ENCODE measurements at regions of chr17 and their contacts with region 1.

Region 1: DNA sequence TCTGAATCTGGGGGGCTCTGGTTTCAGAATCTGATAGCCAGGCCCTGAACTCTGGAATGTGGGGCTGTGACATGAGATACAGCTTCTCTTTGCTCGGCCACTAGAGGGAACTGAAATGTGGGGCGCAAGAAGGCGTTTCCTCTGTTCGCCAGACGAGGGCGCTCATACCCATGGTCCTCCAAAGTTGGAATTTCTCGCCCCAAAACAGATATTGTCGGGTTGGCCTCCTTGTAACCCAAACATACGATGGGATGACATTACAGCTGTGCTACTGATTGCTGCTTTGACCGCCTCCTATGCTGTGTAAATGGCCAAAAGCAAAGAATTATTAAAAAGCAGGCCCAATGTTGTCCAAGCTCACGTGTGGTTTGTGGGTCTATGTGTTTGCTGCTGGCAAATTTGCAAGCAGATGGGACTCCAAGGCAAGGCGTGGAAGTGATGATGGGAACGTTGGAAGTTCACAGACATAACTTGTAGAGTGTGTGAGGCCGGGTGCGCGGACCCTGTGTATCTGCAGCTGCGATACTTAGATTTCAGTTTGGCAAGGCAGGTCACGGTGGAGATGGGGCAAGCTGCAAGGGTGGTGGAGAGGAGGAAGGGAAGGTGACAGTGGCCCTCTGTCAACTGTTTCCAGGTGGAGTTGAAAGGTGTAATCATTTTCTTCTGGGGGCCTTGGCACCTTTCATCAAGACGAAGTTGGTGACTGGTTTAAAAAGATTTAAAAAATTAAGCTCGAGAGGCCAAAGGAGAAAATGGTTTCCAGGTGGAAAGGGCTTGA is 13.0 kb upstream of the MSI2 start:
- DNase-seq: peak; percentile 1
- H3K4me3 ChIP-seq: no peak overlapping the region
- CTCF ChIP-seq: peak; percentile 99

Region 2: GRCh38 chr17:56939901-56940343 is 303.4 kb before region 1 on chr17:
- CTCF ChIA-PET with region 1: no interaction called
- POLR2A ChIA-PET with region 1: no interaction called
- DNase-seq: no peak
- H3K4me3 ChIP-seq: no peak overlapping the region
- CTCF ChIP-seq: peak; percentile 25

Region 3: DNA sequence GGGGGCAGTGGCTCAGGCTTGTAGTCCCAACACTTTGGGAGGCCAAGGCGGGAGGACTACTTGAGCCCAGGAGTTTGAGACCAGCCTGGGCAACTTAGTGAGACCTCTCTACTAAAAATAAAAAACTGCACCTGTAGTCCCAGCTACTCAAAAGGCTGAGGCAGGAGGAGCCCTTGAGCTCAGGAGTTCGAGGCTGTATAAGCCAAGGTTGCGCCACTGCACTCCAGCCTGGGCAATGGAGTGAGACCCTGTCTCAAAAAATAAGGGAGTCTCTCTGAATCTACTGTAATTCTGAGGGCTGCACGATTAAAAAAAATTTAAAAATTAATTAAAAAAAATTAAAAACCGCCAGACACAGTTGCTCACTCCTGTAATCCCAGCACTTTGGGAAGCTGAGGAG is 286.4 kb before region 1 on chr17:
- CTCF ChIA-PET with region 1: no interaction called
- POLR2A ChIA-PET with region 1: no interaction called
- DNase-seq: no peak
- H3K4me3 ChIP-seq: no peak overlapping the region
- CTCF ChIP-seq: no peak

Region 4: GRCh38 chr17:57261084-57261461 is 17.7 kb after region 1 on chr17:
- CTCF ChIA-PET with region 1: interaction called, 29 read pairs
- POLR2A ChIA-PET with region 1: no interaction called
- DNase-seq: no peak
- H3K4me3 ChIP-seq: no peak overlapping the region
- CTCF ChIP-seq: no peak

Region 5: GRCh38 chr17:57486873-57487301 is 243.5 kb after region 1 on chr17:
- CTCF ChIA-PET with region 1: interaction called, 18 read pairs
- POLR2A ChIA-PET with region 1: no interaction called
- DNase-seq: no peak
- H3K4me3 ChIP-seq: no peak overlapping the region
- CTCF ChIP-seq: no peak

Region 6: GRCh38 chr17:57557834-57558681 is 314.7 kb after region 1 on chr17:
- CTCF ChIA-PET with region 1: interaction called, 10 read pairs
- POLR2A ChIA-PET with region 1: no interaction called
- DNase-seq: peak; percentile 21
- H3K4me3 ChIP-seq: no peak overlapping the region
- CTCF ChIP-seq: no peak

Region 7: GRCh38 chr17:57662644-57663308 is 419.4 kb after region 1 on chr17:
- CTCF ChIA-PET with region 1: interaction called, 21 read pairs
- POLR2A ChIA-PET with region 1: no interaction called
- DNase-seq: peak; percentile 95
- H3K4me3 ChIP-seq: peak overlapping the region; percentile 34
- CTCF ChIP-seq: no peak

Region 8: DNA sequence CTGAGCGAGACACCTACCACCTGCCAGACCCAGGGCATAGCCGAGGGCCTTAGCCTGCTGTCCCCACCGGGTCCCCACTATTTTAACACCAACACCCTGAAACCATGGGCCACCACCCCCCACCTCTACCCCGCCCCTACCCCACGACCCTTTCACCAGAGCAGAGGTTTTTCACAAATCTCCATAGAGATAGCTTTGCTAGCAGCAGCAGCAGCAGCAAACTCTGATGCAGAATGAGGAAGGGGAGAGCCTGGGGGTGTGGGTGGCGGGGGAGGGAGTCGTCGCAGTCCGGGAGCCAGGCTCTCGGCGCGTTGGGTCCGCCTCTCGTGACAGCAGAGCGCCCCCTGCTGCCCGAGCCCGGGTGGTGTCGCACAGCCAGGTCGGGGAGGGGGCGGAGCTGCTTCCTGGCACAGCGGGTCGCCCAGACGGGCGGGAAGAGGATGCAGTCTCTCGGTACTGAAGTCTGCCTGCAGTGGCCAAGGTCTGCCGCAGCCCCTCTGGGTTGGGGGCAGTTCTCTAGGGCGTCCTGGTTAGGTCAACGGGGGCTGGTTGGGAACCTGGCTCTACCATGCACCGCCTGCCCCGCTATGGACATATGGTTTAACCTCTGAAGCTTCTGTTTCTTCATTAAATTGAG is 539.9 kb after region 1 on chr17:
- CTCF ChIA-PET with region 1: interaction called, 20 read pairs
- POLR2A ChIA-PET with region 1: no interaction called
- DNase-seq: no peak
- H3K4me3 ChIP-seq: no peak overlapping the region
- CTCF ChIP-seq: peak; percentile 81

Measured in AG04449 (cell line).